Right lobe of liver (tissue), 6 donors: ENCODE measurements at regions of chrX and their contacts with region 1.

Region 1: GRCh38 chrX:50756276-50756675 is 57.7 kb downstream of the SHROOM4 start:
- DNase-seq: no peak
- ATAC-seq: no peak
- H3K4me3 ChIP-seq: no peak overlapping the region
- H3K27ac ChIP-seq: no peak overlapping the region
- H3K4me1 ChIP-seq: no peaks in the 10 kb centered on the region
- H3K27me3 ChIP-seq: no peaks in the 10 kb centered on the region
- CTCF ChIP-seq: no peak
- POLR2A ChIP-seq: no peak

Region 2: DNA sequence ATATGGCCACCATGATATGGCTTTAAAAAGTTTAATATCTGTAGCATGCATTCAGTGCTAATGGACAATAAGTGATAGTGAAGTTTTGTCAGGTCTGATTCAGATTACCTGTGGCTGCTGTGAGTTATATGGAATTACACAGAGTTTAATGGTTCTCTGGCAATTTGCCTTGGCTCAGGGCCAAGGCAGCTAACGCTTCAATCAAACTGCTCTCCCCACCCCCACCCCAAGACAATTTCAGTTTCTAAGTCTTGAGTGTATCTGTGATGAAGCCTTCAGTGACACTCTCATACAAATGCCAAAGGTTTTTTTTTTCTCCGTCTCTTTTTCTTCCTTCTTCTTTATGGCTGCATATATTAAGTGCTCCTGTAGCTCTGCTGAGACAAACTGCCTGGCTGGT is 48.9 kb before region 1 on chrX:
- intact Hi-C with region 1: no loop called
- DNase-seq: no peak
- ATAC-seq: no peak
- H3K4me3 ChIP-seq: no peak overlapping the region
- H3K27ac ChIP-seq: no peak overlapping the region
- H3K4me1 ChIP-seq: no peaks in the 10 kb centered on the region
- H3K27me3 ChIP-seq: peaks cover 0 to 14% of the 10 kb centered on the region in 2 donors
- CTCF ChIP-seq: no peak
- POLR2A ChIP-seq: no peak

Region 3: DNA sequence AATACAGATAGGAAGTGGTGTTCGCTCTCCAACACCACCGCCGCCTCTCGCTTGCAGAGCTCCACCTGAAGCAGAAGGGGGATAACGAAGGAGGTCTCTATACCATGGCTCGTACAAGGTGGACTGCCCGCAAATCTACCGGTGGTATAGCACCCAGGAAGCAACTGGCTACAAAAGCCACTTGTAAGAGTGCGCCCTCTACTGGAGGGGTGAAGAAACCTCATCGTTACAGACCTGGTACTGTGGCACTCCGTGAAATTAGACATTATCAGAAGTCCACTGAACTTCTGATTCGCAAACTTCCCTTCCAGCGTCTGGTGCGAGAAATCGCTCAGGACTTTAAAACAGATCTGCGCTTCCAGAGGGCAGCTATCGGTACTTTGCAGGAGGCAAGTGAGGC is 149.1 kb after region 1 on chrX:
- intact Hi-C with region 1: loop called in 1 of 2 experiments (anchors 10 kb)
- DNase-seq: peak in 1 of 3 donors; percentile 44
- ATAC-seq: no peak
- H3K4me3 ChIP-seq: no peak overlapping the region
- H3K27ac ChIP-seq: no peak overlapping the region
- H3K4me1 ChIP-seq: no peaks in the 10 kb centered on the region
- H3K27me3 ChIP-seq: no peaks in the 10 kb centered on the region
- CTCF ChIP-seq: peak; percentile 31 to 60 (median 54)
- POLR2A ChIP-seq: no peak

Region 4: DNA sequence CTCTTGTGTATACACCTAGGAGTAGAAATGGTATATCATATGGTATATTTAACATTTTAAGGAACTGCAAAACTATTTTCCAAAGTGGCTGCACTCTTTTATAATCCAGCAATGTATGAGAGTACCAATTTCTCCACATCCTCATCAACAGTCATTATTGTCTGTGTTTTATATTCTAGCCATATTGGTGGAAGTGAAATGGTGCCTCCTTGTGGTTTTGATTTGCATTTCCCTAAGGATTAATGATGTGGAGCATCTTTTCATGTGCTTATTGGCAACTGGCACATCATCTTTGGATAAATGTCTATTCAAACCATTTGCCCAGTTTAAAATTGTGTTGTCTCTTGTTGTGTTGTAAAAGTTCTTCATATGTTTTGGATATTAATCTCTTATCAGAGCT is 163.9 kb after region 1 on chrX:
- intact Hi-C with region 1: no loop called
- DNase-seq: no peak
- ATAC-seq: no peak
- H3K4me3 ChIP-seq: no peak overlapping the region
- H3K27ac ChIP-seq: no peak overlapping the region
- H3K4me1 ChIP-seq: no peaks in the 10 kb centered on the region
- H3K27me3 ChIP-seq: no peaks in the 10 kb centered on the region
- CTCF ChIP-seq: peak; percentile 30 to 45 (median 41)
- POLR2A ChIP-seq: no peak